ENCODE measurements at regions of chr9 and their contacts with region 1.

Region 1: DNA sequence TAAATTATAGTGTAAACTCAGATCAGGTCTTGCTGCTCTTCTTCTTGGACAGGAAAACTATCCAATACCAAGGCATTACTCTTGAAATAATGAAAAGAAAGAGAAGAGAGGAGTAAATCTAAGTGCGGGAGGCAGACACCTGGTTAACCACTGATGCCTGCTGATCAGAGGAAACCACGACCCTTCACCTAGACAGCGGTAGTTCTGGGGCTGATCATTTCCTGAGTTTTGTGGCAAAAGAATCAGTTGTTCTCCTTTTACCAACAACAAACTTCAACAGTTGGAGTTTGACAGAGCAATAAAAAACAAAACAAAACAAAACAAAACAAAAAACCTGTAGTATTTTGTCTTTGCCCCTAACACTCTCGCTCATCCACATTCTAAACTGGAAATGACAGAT is 3.0 kb downstream of the RLN1 start:
- DNase-seq: peak; percentile 42
- H3K4me3 Mint-ChIP-seq: peak overlapping the region; percentile 57
- H3K27ac Mint-ChIP-seq: no peak overlapping the region
- H3K4me1 Mint-ChIP-seq: peaks cover 39% of the 10 kb centered on the region
- H3K27me3 Mint-ChIP-seq: no peaks in the 10 kb centered on the region

Region 2: GRCh38 chr9:5375091-5375490 is 38.4 kb after region 1 on chr9:
- CTCF ChIA-PET with region 1: no interaction called
- intact Hi-C with region 1: loop called (anchors 1 kb)
- DNase-seq: peak; percentile 74
- H3K4me3 Mint-ChIP-seq: peak overlapping the region; percentile 1
- H3K27ac Mint-ChIP-seq: no peak overlapping the region
- H3K4me1 Mint-ChIP-seq: peaks cover 31% of the 10 kb centered on the region
- H3K27me3 Mint-ChIP-seq: no peaks in the 10 kb centered on the region

Measured in activated naive CD4-positive, alpha-beta T cell treated with anti-CD3 and anti-CD28 coated beads for 36 hours (primary cell).